Common myeloid progenitor, CD34-positive (primary cell): ENCODE measurements at regions of chr12 and their contacts with region 1.

Region 1: DNA sequence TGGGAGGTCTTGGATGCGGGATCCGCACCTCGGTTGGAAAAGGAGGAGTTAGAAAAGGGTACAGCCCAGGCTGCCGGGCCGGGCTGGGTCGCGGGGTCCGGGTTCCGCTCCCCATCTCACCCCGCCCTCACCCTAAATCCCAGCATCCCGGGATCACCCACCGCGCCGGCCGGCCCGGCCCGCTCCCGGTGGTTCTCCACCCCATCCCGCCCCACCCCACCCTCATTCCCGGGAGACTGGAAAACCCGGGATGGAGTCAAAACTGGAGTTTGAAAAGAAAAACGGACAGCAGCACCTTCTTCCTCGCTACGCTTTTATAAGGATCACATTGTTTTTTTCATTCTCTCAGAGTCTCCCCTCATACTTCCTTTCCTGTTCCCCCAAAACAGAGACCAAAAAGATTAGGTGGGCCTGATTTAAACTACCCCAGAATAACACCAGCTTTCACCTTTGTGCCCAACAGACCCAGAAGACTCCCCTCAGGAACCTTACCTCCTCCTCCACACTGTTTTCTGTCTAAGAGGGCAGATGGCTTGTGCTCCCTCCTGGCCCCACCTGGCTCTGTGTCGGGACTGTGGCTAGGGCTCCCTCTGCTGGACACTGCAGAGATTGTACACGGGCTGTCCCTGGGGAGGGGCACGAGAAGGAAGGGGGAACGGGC is 2.8 kb downstream of the GLI1 start:
- DNase-seq: peak; percentile 87 to 94 (median 91)
- H3K4me3 ChIP-seq: peak overlapping the region; percentile 15 to 89 (median 71)
- H3K27ac ChIP-seq: no peak overlapping the region
- H3K4me1 ChIP-seq: peaks cover 8 to 40% (median 33%) of the 10 kb centered on the region in 4 experiments
- H3K27me3 ChIP-seq: peaks cover 0 to 13% (median 4%) of the 10 kb centered on the region in 5 experiments

Region 2: DNA sequence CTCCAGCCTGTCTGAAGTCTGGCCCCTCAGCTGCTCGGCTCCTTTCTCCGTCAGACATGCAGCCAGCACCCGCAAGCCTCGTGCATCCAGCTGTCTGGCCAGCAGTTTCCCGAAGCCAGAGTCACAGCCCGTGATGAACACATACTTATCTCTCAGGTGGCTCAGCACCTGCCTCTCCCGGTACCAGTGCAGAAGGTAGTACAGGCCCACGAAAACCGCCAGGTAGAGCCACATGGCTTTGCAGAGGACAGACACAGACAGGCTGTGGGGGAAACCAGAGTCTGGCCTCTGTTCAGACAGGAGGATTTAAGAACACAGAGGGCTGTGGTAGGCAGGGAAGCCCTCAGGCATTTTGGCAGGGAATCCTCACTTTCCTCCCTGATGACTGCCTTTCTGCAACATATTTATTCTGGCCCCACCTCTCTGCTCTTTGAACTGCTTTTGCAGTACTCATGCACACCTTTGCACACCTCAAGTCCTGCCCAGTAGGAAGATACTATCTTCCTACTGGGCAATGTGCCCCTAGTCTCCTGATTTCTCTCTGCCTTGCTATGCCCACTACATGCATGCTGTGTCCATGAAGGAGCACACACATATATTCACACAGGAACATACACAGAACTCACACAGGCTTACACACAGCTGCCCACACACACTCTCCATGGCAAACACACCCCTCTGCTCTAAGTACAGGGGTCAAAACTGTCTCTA is 505.0 kb before region 1 on chr12 and contains the start of gene RDH16:
- CTCF ChIA-PET with region 1: no interaction called
- POLR2A ChIA-PET with region 1: no interaction called
- DNase-seq: no peak
- H3K4me3 ChIP-seq: no peak within 1 kb of the TSS
- H3K27ac ChIP-seq: no peak within 1 kb of the TSS
- H3K4me1 ChIP-seq: no peaks in the 10 kb centered on the region
- H3K27me3 ChIP-seq: no peaks in the 10 kb centered on the region

Region 3: GRCh38 chr12:57309420-57309819 is 153.0 kb before region 1 on chr12:
- CTCF ChIA-PET with region 1: interaction called, 518 read pairs
- POLR2A ChIA-PET with region 1: interaction called, 4 read pairs
- DNase-seq: no peak
- H3K4me3 ChIP-seq: no peak overlapping the region
- H3K27ac ChIP-seq: no peak overlapping the region
- H3K4me1 ChIP-seq: no peaks in the 10 kb centered on the region
- H3K27me3 ChIP-seq: no peaks in the 10 kb centered on the region

Region 4: GRCh38 chr12:57395121-57395520 is 67.3 kb before region 1 on chr12:
- CTCF ChIA-PET with region 1: no interaction called
- POLR2A ChIA-PET with region 1: no interaction called
- DNase-seq: no peak
- H3K4me3 ChIP-seq: no peak overlapping the region
- H3K27ac ChIP-seq: no peak overlapping the region
- H3K4me1 ChIP-seq: no peaks in the 10 kb centered on the region
- H3K27me3 ChIP-seq: no peaks in the 10 kb centered on the region

Region 5: DNA sequence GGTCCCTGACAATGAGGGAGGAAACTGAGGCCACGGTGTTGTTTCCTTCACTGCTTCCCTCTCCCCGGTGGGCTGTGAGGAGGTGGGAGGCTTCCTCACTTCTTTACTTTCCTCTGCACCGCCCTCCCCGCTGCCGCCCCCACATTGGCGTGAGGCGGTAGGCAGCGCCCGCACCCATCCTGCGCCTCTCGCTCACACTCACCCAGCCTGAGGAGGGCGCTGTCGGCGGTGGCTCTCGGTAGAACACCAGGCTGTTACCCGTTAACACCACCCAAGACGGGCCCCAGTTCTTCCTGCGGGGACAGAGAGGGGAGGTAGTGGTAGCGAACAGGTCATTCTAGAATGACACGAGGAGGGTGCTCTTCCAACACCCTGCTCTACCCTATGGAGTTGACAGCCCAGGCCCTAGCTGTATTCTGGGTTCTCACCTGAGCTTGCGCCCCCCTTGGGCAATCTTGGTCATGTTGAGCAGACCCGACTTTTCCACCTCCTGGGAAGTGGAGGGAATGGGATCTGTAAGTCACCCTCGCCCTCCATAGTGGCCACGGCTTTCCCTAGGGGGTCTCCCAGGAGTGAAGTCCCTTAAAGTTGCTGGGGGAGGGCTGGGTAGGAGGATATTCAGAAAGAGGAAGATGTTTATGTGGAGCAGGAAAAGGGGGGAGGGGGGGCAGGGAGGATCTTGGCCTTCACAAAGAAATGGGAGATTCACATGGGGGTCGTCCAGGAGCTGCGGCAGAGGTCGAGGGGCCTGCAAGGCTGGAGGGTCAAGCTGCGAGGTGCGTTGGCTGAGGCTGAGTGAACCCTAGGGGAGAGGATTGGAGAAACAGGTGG is 14.0 kb after region 1 on chr12:
- CTCF ChIA-PET with region 1: interaction called, 184 read pairs
- POLR2A ChIA-PET with region 1: interaction called, 4 read pairs
- DNase-seq: peak in 2 of 3 donors; percentile 80 to 83
- H3K4me3 ChIP-seq: peak overlapping the region; percentile 52 to 92 (median 76)
- H3K27ac ChIP-seq: peak overlapping the region; percentile 96
- H3K4me1 ChIP-seq: peaks cover 24 to 66% (median 61%) of the 10 kb centered on the region in 4 experiments
- H3K27me3 ChIP-seq: no peaks in the 10 kb centered on the region

Region 6: GRCh38 chr12:57514720-57515467 is 52.5 kb after region 1 on chr12:
- CTCF ChIA-PET with region 1: interaction called, 11 read pairs
- POLR2A ChIA-PET with region 1: interaction called, 4 read pairs
- DNase-seq: no peak
- H3K4me3 ChIP-seq: no peak overlapping the region
- H3K27ac ChIP-seq: no peak overlapping the region
- H3K4me1 ChIP-seq: peaks cover 0 to 19% (median 17%) of the 10 kb centered on the region in 4 experiments
- H3K27me3 ChIP-seq: no peaks in the 10 kb centered on the region